ENCODE measurements at regions of chr3 and their contacts with region 1.

Region 1: GRCh38 chr3:12948891-12949711 is 107.7 kb upstream of the RPL32 start:
- DNase-seq: no peak
- H3K4me3 ChIP-seq: no peak overlapping the region
- H3K27ac ChIP-seq: peak overlapping the region; percentile 2 to 51; a peak in 2 of 4 replicates
- H3K4me1 ChIP-seq: peaks cover 20 to 72% of the 10 kb centered on the region in 2 experiments; a peak in 3 of 4 replicates
- H3K27me3 ChIP-seq: no peaks in the 10 kb centered on the region
- CTCF ChIP-seq: no peak
- EP300 ChIP-seq: no peak
- RAD21 ChIP-seq: no peak

Region 2: GRCh38 chr3:12884186-12884680 is 64.9 kb before region 1 on chr3:
- CTCF ChIA-PET with region 1: no interaction called
- POLR2A ChIA-PET with region 1: no interaction called
- DNase-seq: no peak
- H3K4me3 ChIP-seq: no peak overlapping the region
- H3K27ac ChIP-seq: no peak overlapping the region
- H3K4me1 ChIP-seq: no peaks in the 10 kb centered on the region; a peak in 1 of 4 replicates
- H3K27me3 ChIP-seq: peaks cover 5% of the 10 kb centered on the region; the same call in 1 of the 2 replicates
- CTCF ChIP-seq: no peak
- EP300 ChIP-seq: no peak
- RAD21 ChIP-seq: no peak

Region 3: GRCh38 chr3:12907729-12908128 is 41.4 kb before region 1 on chr3:
- CTCF ChIA-PET with region 1: no interaction called
- POLR2A ChIA-PET with region 1: no interaction called
- DNase-seq: no peak
- H3K4me3 ChIP-seq: no peak overlapping the region
- H3K27ac ChIP-seq: no peak overlapping the region
- H3K4me1 ChIP-seq: no peaks in the 10 kb centered on the region
- H3K27me3 ChIP-seq: no peaks in the 10 kb centered on the region
- CTCF ChIP-seq: no peak
- EP300 ChIP-seq: no peak
- RAD21 ChIP-seq: no peak

Region 4: DNA sequence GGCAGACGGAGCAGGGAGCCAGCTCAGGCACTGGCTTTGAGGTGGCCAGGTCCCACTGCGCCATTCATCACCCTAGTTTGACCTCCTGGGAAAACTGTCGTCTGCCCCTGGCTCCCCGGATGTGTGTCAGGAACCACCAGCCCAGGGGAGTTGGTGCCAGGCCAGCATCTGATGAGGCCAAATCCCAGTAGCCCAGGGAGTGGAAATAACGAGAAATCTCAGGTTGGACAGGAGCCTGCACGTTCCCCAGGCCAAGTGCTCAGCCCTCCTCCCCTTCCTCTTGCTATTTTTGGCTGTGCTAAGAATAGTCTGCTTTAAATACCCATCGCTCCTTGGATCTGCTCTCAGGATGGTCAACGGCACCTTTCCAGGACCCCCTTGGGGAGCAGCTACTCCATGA is 14.7 kb before region 1 on chr3:
- CTCF ChIA-PET with region 1: interaction called, 21 read pairs
- POLR2A ChIA-PET with region 1: no interaction called
- DNase-seq: no peak
- H3K4me3 ChIP-seq: no peak overlapping the region
- H3K27ac ChIP-seq: peak overlapping the region in 1 of 2 experiments; percentile 34; a peak in 1 of 4 replicates
- H3K4me1 ChIP-seq: peaks cover 0 to 55% of the 10 kb centered on the region in 2 experiments; a peak in 2 of 4 replicates
- H3K27me3 ChIP-seq: no peaks in the 10 kb centered on the region
- CTCF ChIP-seq: no peak
- EP300 ChIP-seq: no peak
- RAD21 ChIP-seq: no peak

Region 5: GRCh38 chr3:13260259-13261103 is 311.4 kb after region 1 on chr3:
- CTCF ChIA-PET with region 1: no interaction called
- POLR2A ChIA-PET with region 1: no interaction called
- DNase-seq: no peak
- H3K4me3 ChIP-seq: no peak overlapping the region
- H3K27ac ChIP-seq: no peak overlapping the region
- H3K4me1 ChIP-seq: peaks cover 0 to 36% of the 10 kb centered on the region in 2 experiments; a peak in 1 of 4 replicates
- H3K27me3 ChIP-seq: no peaks in the 10 kb centered on the region
- CTCF ChIP-seq: peak; percentile 26; the same call in 1 of the 2 replicates
- EP300 ChIP-seq: no peak
- RAD21 ChIP-seq: no peak

Measured in SK-N-SH (cell line).